ENCODE measurements at regions of chr7 and their contacts with region 1.

Region 1: DNA sequence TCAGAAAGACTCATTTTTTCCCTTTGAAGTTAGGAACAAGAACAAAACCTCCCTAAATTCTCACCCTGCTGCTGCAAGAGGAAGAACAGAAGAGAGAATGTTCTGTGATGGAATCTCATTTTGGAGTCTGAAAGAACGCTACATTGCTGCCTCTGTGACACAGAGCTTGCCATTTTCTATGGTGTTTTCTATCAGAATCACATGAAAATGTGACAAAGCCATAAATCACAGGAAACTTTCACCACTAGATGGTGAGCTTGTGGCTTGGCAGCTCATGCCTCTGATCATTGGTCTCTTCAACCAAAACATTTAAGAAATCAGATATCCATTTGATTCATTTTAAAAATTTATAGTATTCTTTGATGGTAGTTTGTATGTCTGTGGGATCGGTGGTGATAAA is 82.9 kb downstream of the CADPS2 start:
- DNase-seq: no peak
- H3K4me3 Mint-ChIP-seq: no peak overlapping the region
- H3K27ac Mint-ChIP-seq: no peak overlapping the region
- H3K4me1 Mint-ChIP-seq: no peaks in the 10 kb centered on the region
- H3K27me3 Mint-ChIP-seq: no peaks in the 10 kb centered on the region
- CTCF ChIP-seq: peak; percentile 11

Region 2: DNA sequence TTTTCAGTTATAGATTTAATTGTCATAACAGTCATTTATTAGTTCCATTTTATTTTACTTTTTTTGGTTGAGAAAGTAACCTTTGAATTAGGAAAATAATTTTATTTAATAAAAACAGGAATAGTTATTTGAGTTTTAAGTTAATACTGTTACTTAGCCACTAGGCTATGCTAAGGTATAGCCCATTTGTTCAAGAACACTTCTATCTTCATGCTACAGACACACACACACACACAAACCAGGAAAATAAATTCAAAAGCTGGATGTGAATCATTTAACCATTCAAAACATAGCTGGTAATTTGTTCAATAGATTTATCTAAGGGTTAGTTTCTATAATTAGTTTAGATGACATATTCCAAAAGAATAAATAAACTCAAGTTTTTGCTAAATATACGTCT is 252.8 kb before region 1 on chr7:
- CTCF ChIA-PET with region 1: no interaction called
- intact Hi-C with region 1: loop called (anchors 10 kb)
- DNase-seq: no peak
- H3K4me3 Mint-ChIP-seq: no peak overlapping the region
- H3K27ac Mint-ChIP-seq: no peak overlapping the region
- H3K4me1 Mint-ChIP-seq: no peaks in the 10 kb centered on the region
- H3K27me3 Mint-ChIP-seq: no peaks in the 10 kb centered on the region
- CTCF ChIP-seq: no peak

Region 3: DNA sequence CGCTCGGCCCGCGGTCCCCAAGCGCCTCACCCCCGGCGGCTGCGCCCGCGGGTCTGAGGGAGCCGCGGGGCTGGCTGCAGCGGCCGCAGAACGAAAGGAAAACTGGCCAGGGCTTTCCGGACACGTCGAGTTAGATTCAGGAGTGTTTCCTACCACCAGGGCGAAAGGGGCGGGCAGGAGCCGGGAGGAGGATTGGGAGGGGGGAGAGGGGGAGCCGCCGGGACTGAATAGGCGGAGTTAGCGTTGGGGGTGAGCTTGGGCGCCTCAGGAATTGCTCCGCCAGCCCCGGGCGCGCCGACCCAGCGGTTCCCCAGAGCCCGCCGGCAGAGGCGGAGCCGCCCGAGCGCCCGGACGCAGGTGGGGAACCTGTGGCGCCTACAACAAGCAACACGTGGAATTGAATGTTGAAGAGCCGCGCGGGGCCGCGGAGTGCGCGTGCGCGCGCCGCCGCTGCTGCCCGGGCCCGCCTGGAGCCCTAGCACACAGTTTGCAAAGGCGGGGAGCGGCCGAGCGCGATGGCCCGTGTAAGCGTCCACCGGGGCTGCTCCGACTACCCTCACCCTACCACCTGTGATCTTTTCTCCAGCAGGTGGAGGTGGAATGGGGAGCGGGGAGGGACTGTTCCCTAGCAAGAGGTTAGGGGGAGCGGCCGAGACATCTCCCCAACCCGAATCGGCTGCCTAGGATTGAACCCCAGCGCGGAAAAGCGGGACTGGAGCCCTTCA is 83.2 kb after region 1 on chr7 and contains the start of gene CADPS2:
- CTCF ChIA-PET with region 1: no interaction called
- intact Hi-C with region 1: loop called (anchors 5 kb)
- DNase-seq: peak; percentile 91
- H3K4me3 Mint-ChIP-seq: peak within 1 kb of the TSS; percentile 95
- H3K27ac Mint-ChIP-seq: peak within 1 kb of the TSS; percentile 81
- H3K4me1 Mint-ChIP-seq: peaks cover 18% of the 10 kb centered on the region
- H3K27me3 Mint-ChIP-seq: no peaks in the 10 kb centered on the region
- CTCF ChIP-seq: no peak
- total RNA-seq, gene CADPS2: 14.1 and 16.4 TPM in 2 replicates

Region 4: GRCh38 chr7:123054357-123055130 is 251.2 kb after region 1 on chr7:
- CTCF ChIA-PET with region 1: no interaction called
- intact Hi-C with region 1: loop called (anchors 10 kb)
- DNase-seq: peak; percentile 18
- H3K4me3 Mint-ChIP-seq: no peak overlapping the region
- H3K27ac Mint-ChIP-seq: no peak overlapping the region
- H3K4me1 Mint-ChIP-seq: no peaks in the 10 kb centered on the region
- H3K27me3 Mint-ChIP-seq: no peaks in the 10 kb centered on the region
- CTCF ChIP-seq: no peak

Region 5: DNA sequence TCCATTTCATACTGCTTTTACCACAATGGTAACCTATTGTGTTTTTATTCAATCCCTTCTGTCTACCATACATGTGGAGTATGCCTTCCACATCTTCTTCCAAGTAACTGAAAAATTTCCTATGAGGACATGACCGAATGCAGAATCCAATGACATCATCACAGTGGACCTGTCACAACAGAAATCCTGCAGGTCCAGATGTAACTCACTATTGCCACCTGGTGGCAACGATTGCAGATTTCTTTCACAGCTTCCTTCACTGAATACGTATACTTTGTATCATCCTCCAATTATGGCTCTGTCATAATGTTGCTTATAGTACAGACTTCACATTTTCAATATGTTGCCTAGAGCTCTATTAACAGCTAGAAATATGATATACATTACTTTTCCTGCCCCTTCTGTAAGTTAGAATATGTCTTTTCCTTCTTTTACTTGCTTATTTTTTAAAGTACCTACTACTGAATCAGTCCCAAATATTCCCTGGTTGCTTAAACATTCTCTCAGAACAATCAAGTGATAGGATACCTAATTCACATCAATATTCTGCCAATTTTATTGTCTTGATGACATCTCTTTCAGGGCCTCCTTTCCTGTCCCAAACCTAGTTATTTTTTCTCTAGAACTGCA is 351.0 kb after region 1 on chr7:
- CTCF ChIA-PET with region 1: interaction called, 8 read pairs
- intact Hi-C with region 1: loop called (anchors 2 kb)
- DNase-seq: peak; percentile 82
- H3K4me3 Mint-ChIP-seq: no peak overlapping the region
- H3K27ac Mint-ChIP-seq: no peak overlapping the region
- H3K4me1 Mint-ChIP-seq: peaks cover 1% of the 10 kb centered on the region
- H3K27me3 Mint-ChIP-seq: no peaks in the 10 kb centered on the region
- CTCF ChIP-seq: peak; percentile 76

Region 6: GRCh38 chr7:123367484-123368122 is 564.3 kb after region 1 on chr7:
- CTCF ChIA-PET with region 1: interaction called, 6 read pairs
- intact Hi-C with region 1: loop called (anchors 10 kb)
- DNase-seq: peak; percentile 24
- H3K4me3 Mint-ChIP-seq: no peak overlapping the region
- H3K27ac Mint-ChIP-seq: no peak overlapping the region
- H3K4me1 Mint-ChIP-seq: no peaks in the 10 kb centered on the region
- H3K27me3 Mint-ChIP-seq: no peaks in the 10 kb centered on the region
- CTCF ChIP-seq: peak; percentile 66

Measured in Calu3 (cell line).